Body of pancreas (tissue), 4 donors: ENCODE measurements at regions of chr12 and their contacts with region 1.

Region 1: GRCh38 chr12:113056631-113057488 is at the start of gene DTX1:
- DNase-seq: peak; percentile 33 to 51 (median 40)
- ATAC-seq: peak; percentile 69
- H3K4me3 ChIP-seq: peak within 1 kb of the TSS; percentile 36 to 45
- H3K27ac ChIP-seq: peak within 1 kb of the TSS; percentile 20 to 57 (median 52)
- H3K4me1 ChIP-seq: peaks cover 19% of the 10 kb centered on the region
- H3K27me3 ChIP-seq: peaks cover 0 to 7% of the 10 kb centered on the region in 2 donors
- CTCF ChIP-seq: peak in 1 of 7 experiments; percentile 9
- POLR2A ChIP-seq: no peak
- total RNA-seq, gene DTX1: 11.9 to 17.5 TPM

Region 2: GRCh38 chr12:113092607-113093408 is 35.9 kb after region 1 on chr12:
- intact Hi-C with region 1: loop called (anchors 5 kb)
- DNase-seq: peak in 3 of 4 donors; percentile 28 to 49 (median 41)
- ATAC-seq: peak; percentile 22
- H3K4me3 ChIP-seq: no peak overlapping the region
- H3K27ac ChIP-seq: no peak overlapping the region
- H3K4me1 ChIP-seq: peaks cover under 1% of the 10 kb centered on the region
- H3K27me3 ChIP-seq: no peaks in the 10 kb centered on the region
- CTCF ChIP-seq: no peak
- POLR2A ChIP-seq: no peak

Region 3: GRCh38 chr12:113276306-113276705 is 219.4 kb after region 1 on chr12:
- intact Hi-C with region 1: no loop called
- DNase-seq: no peak
- ATAC-seq: no peak
- H3K4me3 ChIP-seq: no peak overlapping the region
- H3K27ac ChIP-seq: no peak overlapping the region
- H3K4me1 ChIP-seq: peaks cover 19% of the 10 kb centered on the region
- H3K27me3 ChIP-seq: no peaks in the 10 kb centered on the region
- CTCF ChIP-seq: no peak
- POLR2A ChIP-seq: no peak